GM12878 (cell line): ENCODE measurements at regions of chr16 and their contacts with region 1.

Region 1: GRCh38 chr16:15822957-15823356 is 33.9 kb downstream of the MYH11 start:
- DNase-seq: no peak
- ATAC-seq: no peak
- H3K4me3 ChIP-seq: no peak overlapping the region
- H3K27ac ChIP-seq: no peak overlapping the region
- H3K4me1 ChIP-seq: no peaks in the 10 kb centered on the region
- H3K27me3 ChIP-seq: no peaks in the 10 kb centered on the region
- CTCF ChIP-seq: no peak
- EP300 ChIP-seq: no peak
- POLR2A ChIP-seq: no peak
- RAD21 ChIP-seq: no peak

Region 2: DNA sequence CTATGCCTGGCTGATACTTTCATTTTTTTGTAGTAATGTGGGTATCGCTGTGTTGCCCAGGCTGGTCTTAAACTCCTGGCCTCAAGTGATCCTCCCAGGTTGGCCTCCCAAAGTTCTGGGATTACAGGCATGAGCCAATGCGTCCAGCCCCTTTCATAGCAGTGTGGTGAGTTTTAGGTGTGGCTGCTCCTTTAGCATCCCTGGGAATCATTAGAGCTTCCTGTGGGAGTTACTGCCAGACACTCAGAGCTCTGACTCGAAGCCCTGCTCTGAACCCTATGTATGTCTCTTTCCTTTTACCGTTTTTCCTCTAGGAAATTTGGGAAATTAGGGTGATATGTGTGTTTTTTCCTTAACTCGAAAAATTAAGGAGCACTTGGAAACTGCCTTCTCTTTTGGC is 128.5 kb before region 1 on chr16:
- CTCF ChIA-PET with region 1: no interaction called
- POLR2A ChIA-PET with region 1: no interaction called
- RAD21 ChIA-PET with region 1: no interaction called
- SMC1A ChIA-PET with region 1: no interaction called
- in situ Hi-C with region 1: no loop called
- intact Hi-C with region 1: no loop called
- DNase-seq: no peak
- ATAC-seq: no peak
- H3K4me3 ChIP-seq: no peak overlapping the region
- H3K27ac ChIP-seq: no peak overlapping the region
- H3K4me1 ChIP-seq: no peaks in the 10 kb centered on the region
- H3K27me3 ChIP-seq: no peaks in the 10 kb centered on the region
- CTCF ChIP-seq: no peak
- EP300 ChIP-seq: no peak
- POLR2A ChIP-seq: no peak
- RAD21 ChIP-seq: no peak

Region 3: GRCh38 chr16:15811481-15812400 is 11.2 kb before region 1 on chr16:
- CTCF ChIA-PET with region 1: interaction called, 12 read pairs
- POLR2A ChIA-PET with region 1: no interaction called
- RAD21 ChIA-PET with region 1: no interaction called
- SMC1A ChIA-PET with region 1: no interaction called
- in situ Hi-C with region 1: no loop called
- intact Hi-C with region 1: no loop called
- DNase-seq: no peak
- ATAC-seq: no peak
- H3K4me3 ChIP-seq: no peak overlapping the region
- H3K27ac ChIP-seq: no peak overlapping the region
- H3K4me1 ChIP-seq: peaks cover 4% of the 10 kb centered on the region
- H3K27me3 ChIP-seq: peaks cover 0 to 2% of the 10 kb centered on the region in 2 experiments; a peak in 1 of 4 replicates
- CTCF ChIP-seq: no peak
- EP300 ChIP-seq: no peak
- POLR2A ChIP-seq: no peak
- RAD21 ChIP-seq: no peak